GM12878 (cell line): ENCODE measurements at regions of chr5 and their contacts with region 1.

Region 1: DNA sequence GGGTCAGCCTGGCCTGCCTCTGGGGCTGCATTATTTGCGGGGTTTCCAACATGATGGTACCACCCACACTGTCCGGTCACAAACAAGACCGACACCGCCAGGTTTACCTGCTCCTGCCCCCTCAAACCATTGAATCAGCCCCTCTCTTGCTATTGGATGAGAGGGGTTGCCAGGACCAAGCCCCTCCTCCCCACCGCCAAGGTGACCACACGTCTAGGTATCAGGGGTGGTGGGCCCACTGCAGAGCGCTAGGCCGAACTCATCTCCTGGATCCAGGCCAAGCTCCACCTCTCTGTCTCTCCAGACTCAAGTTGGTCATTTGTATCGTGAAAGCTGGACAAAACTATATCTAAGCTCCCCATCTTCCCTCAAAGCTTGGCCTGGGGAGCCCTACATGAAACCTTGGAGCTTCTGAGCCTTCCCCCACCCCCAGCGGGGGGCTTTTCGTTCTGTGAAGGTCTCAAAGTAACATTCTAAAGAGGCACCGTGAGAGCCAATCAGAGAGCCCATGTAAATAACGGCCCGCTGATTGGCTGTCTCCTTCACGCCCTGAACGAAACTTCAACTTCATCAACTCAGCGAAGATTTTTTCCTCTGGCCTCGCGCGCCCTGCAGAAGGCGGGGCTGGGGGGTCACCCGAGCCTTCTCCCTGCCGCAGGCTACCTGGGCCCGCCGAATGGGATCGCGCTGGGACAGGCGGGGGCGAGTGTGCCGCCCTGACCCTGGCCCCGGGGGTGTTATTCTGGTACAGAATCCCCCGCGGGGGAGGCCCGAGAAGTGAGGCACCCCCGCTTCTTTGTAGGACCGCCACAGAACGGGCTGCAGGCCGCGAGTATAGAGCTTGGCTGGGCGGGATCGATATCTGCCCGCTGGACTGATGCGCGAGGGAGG is 49.6 kb upstream of the PSD2 start:
- DNase-seq: no peak
- ATAC-seq: peak; percentile 61
- H3K4me3 ChIP-seq: no peak overlapping the region
- H3K27ac ChIP-seq: peak overlapping the region; percentile 33; the same call in 1 of the 2 replicates
- H3K4me1 ChIP-seq: peaks cover 48% of the 10 kb centered on the region
- H3K27me3 ChIP-seq: peaks cover 0 to 14% of the 10 kb centered on the region in 2 experiments; a peak in 3 of 4 replicates
- CTCF ChIP-seq: no peak
- EP300 ChIP-seq: no peak
- POLR2A ChIP-seq: no peak
- RAD21 ChIP-seq: no peak

Region 2: DNA sequence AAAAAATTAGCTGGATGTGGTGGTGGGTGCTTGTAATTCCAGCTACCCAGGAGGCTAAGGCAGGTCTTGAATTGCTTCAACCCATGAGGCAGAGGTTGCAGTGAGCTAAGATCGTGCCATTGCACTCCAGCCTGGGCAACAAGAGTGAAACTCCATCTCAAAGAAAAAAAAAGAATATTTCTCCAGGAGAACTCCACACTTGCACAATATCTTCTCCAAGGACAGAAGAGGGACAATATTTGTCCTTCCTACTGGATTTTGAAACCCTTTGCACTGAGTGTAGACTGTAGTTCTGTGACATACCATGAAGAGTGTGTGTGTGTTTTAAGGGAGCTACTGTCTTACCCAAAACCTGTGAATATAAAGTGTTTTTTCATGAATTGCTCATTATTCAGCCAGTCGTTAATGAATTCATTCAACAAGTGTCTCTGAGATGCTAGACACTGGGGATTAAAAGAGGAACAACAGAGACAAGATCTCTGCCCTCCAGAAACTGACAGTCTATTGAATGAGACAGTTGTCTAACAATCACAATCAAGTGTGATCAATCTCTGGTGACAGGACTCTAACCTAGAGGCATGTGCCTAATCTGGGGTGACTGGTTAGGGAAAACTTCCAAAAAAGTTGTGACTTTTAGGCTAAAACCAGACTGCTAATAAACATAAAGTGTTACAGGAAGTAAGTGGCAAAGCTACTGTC is 194.7 kb before region 1 on chr5:
- CTCF ChIA-PET with region 1: no interaction called
- POLR2A ChIA-PET with region 1: no interaction called
- RAD21 ChIA-PET with region 1: no interaction called
- SMC1A ChIA-PET with region 1: no interaction called
- in situ Hi-C with region 1: no loop called
- intact Hi-C with region 1: no loop called
- DNase-seq: no peak
- ATAC-seq: peak; percentile 41
- H3K4me3 ChIP-seq: no peak overlapping the region
- H3K27ac ChIP-seq: no peak overlapping the region
- H3K4me1 ChIP-seq: no peaks in the 10 kb centered on the region
- H3K27me3 ChIP-seq: no peaks in the 10 kb centered on the region
- CTCF ChIP-seq: no peak
- EP300 ChIP-seq: no peak
- POLR2A ChIP-seq: no peak
- RAD21 ChIP-seq: no peak

Region 3: GRCh38 chr5:139651853-139652787 is 93.9 kb before region 1 on chr5:
- CTCF ChIA-PET with region 1: interaction called, 3 read pairs
- POLR2A ChIA-PET with region 1: interaction called, 11 read pairs
- RAD21 ChIA-PET with region 1: interaction called, 13 read pairs
- SMC1A ChIA-PET with region 1: interaction called, 5 read pairs
- in situ Hi-C with region 1: no loop called
- intact Hi-C with region 1: loop called (anchors 5 kb)
- DNase-seq: peak; percentile 85
- ATAC-seq: peak; percentile 51
- H3K4me3 ChIP-seq: peak overlapping the region; percentile 96
- H3K27ac ChIP-seq: peak overlapping the region; percentile 91
- H3K4me1 ChIP-seq: peaks cover 59% of the 10 kb centered on the region
- H3K27me3 ChIP-seq: no peaks in the 10 kb centered on the region
- CTCF ChIP-seq: no peak
- EP300 ChIP-seq: peak; percentile 55 to 62; a peak in 2 of 4 replicates
- POLR2A ChIP-seq: no peak
- RAD21 ChIP-seq: no peak

Region 4: DNA sequence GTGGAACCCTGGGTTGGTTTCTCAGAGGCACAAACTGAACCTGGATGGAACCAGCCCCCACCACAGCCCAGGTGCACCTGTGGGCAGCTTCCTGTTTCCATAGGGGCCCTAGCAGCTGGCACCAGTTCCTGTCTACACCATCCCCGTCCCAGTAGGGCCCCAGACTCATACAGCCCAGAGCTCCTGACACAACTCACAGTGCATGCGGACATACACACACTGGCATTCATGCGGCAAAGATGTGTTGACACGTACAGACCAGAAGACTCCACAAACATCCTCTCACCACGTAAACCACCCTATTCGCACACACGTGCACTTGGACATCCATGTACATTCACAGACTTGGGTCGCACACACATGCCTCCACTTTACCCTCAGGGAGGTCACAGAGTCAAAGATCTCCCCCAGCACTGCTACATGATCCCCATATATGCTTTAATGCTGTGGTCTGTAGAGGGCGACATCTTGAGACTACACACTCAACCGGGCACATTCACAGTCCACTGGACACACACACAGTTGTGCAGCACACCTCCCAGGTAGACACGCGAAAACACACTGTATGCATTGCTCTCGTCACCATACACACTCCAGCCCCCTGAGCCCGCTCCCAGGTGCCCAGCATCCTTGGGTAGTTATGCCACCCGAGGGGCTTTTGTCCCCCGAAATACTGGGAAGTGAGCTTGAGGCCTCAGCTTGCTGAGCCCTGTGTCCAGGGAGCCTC is 75.5 kb before region 1 on chr5:
- CTCF ChIA-PET with region 1: interaction called, 5 read pairs
- POLR2A ChIA-PET with region 1: interaction called, 19 read pairs
- RAD21 ChIA-PET with region 1: interaction called, 24 read pairs
- SMC1A ChIA-PET with region 1: interaction called, 5 read pairs
- in situ Hi-C with region 1: no loop called
- intact Hi-C with region 1: no loop called
- DNase-seq: peak; percentile 90
- ATAC-seq: peak; percentile 59
- H3K4me3 ChIP-seq: peak overlapping the region; percentile 84
- H3K27ac ChIP-seq: peak overlapping the region; percentile 99
- H3K4me1 ChIP-seq: peaks cover 54% of the 10 kb centered on the region
- H3K27me3 ChIP-seq: no peaks in the 10 kb centered on the region
- CTCF ChIP-seq: peak; percentile 52 to 65 (median 53)
- EP300 ChIP-seq: peak in 1 of 2 experiments; percentile 37; a peak in 1 of 4 replicates
- POLR2A ChIP-seq: no peak
- RAD21 ChIP-seq: peak; percentile 34

Region 5: GRCh38 chr5:139711067-139711905 is 34.8 kb before region 1 on chr5:
- CTCF ChIA-PET with region 1: interaction called, 25 read pairs
- POLR2A ChIA-PET with region 1: interaction called, 6 read pairs
- RAD21 ChIA-PET with region 1: interaction called, 31 read pairs
- SMC1A ChIA-PET with region 1: interaction called, 49 read pairs
- in situ Hi-C with region 1: no loop called
- intact Hi-C with region 1: loop called (anchors 5 kb)
- DNase-seq: no peak
- ATAC-seq: peak; percentile 72
- H3K4me3 ChIP-seq: peak overlapping the region; percentile 75
- H3K27ac ChIP-seq: no peak overlapping the region
- H3K4me1 ChIP-seq: peaks cover 21% of the 10 kb centered on the region
- H3K27me3 ChIP-seq: peaks cover 5 to 6% of the 10 kb centered on the region in 2 experiments; a peak in 3 of 4 replicates
- CTCF ChIP-seq: peak; percentile 4 to 38 (median 29); a peak in 3 of 6 replicates
- EP300 ChIP-seq: no peak
- POLR2A ChIP-seq: no peak
- RAD21 ChIP-seq: peak; percentile 39

Region 6: GRCh38 chr5:139765409-139766217 is 19.6 kb after region 1 on chr5:
- CTCF ChIA-PET with region 1: interaction called, 41 read pairs
- POLR2A ChIA-PET with region 1: interaction called, 3 read pairs
- RAD21 ChIA-PET with region 1: interaction called, 14 read pairs
- SMC1A ChIA-PET with region 1: interaction called, 8 read pairs
- in situ Hi-C with region 1: no loop called
- intact Hi-C with region 1: no loop called
- DNase-seq: no peak
- ATAC-seq: peak; percentile 94
- H3K4me3 ChIP-seq: peak overlapping the region; percentile 71; the same call in 1 of the 2 replicates
- H3K27ac ChIP-seq: no peak overlapping the region
- H3K4me1 ChIP-seq: no peaks in the 10 kb centered on the region
- H3K27me3 ChIP-seq: peaks cover 11 to 14% of the 10 kb centered on the region in 2 experiments
- CTCF ChIP-seq: peak; percentile 57 to 93 (median 86)
- EP300 ChIP-seq: no peak
- POLR2A ChIP-seq: no peak
- RAD21 ChIP-seq: peak; percentile 77